ENCODE measurements at regions of chr1 and their contacts with region 1.

Region 1: DNA sequence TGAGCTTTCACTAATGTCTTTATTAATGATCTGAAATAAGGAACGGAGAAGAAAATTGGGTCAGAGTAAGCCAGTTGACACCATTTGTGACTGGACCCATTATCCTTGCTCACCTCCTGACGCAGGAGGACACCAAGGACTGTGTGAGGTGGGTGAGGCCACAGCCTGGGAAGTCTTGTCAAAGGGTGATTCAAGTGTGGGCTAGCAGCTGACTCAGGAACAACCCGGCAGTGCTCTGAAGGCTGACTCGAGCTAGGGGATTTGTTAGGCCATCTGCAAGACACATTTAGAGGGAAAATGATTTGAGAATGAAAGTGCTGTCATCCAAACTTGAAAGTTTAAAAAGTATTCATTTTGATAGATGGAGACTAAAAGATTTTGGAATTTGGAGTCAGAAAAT is 21.2 kb downstream of the PRRX1 start:
- DNase-seq: no peak
- H3K4me3 ChIP-seq: no peak overlapping the region
- H3K27ac ChIP-seq: no peak overlapping the region
- H3K4me1 ChIP-seq: peaks cover 7% of the 10 kb centered on the region
- H3K27me3 ChIP-seq: no peaks in the 10 kb centered on the region
- CTCF ChIP-seq: no peak
- POLR2A ChIP-seq: no peak

Region 2: GRCh38 chr1:170707959-170708655 is 22.9 kb after region 1 on chr1:
- CTCF ChIA-PET with region 1: interaction called, 25 read pairs
- POLR2A ChIA-PET with region 1: interaction called, 3 read pairs
- dilution Hi-C with region 1: no loop called
- intact Hi-C with region 1: no loop called
- DNase-seq: peak; percentile 96
- H3K4me3 ChIP-seq: peak overlapping the region in 1 of 3 experiments; percentile 7
- H3K27ac ChIP-seq: peak overlapping the region; percentile 87
- H3K4me1 ChIP-seq: peaks cover 26% of the 10 kb centered on the region
- H3K27me3 ChIP-seq: no peaks in the 10 kb centered on the region
- CTCF ChIP-seq: no peak
- POLR2A ChIP-seq: no peak

Region 3: DNA sequence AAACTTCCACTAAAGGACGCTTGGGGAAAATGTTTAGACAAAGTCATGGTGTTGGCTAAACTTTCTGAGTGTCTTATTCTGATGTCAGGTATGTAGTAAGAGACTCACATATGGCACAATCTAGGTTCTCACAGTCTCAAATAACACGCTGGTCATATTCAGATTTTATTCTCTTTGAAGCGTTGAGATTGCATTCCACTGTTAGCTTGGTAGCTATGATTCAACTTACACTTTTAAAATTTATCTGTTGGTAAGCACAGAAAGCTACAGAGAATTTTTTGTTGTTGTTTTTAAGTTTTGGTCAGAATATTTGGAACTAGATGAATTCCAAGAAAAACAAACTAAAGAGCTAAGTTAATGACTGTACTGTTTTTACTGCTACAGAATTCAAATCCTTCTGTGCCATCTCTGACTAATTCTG is 105.5 kb after region 1 on chr1:
- CTCF ChIA-PET with region 1: no interaction called
- POLR2A ChIA-PET with region 1: no interaction called
- dilution Hi-C with region 1: no loop called
- intact Hi-C with region 1: no loop called
- DNase-seq: no peak
- H3K4me3 ChIP-seq: no peak overlapping the region
- H3K27ac ChIP-seq: no peak overlapping the region
- H3K4me1 ChIP-seq: no peaks in the 10 kb centered on the region
- H3K27me3 ChIP-seq: no peaks in the 10 kb centered on the region
- CTCF ChIP-seq: no peak
- POLR2A ChIP-seq: no peak